ENCODE measurements at regions of chr20 and their contacts with region 1.

Region 1: DNA sequence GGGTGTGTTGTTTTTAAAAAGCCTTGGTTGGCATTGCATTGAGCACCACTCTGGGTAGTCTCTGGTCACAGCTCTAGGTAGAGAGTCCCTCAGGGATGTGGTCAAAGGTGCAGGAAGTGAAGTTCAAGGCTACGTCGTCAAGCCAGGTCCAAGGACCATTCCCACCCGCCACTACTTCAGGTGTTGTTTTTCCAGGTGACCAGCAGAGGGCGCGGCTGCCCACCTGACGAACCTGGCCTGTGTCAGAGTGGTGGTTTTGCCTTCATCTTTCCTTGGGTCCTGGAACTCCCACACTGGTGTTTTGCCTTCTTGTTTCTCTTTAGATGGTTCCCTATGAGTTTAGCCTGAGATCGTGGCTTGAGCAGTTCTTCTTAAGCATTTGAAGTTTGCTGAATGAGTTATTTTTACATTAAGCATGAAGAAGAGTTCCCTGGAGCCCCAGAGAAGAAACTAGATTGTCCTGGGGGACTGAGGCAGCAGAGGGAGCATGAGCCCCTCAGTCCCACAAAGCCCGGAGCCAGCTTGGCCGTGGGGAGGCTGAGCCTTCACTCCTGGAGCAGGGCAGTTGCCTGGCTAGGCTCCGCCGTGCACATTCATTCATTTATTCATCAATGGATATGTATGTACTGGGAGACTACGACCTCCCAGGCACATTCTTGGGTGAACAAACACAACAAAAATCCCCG is 5.6 kb upstream of the PHACTR3 start:
- DNase-seq: peak in 2 of 9 donors; percentile 5 to 15
- ATAC-seq: no peak
- H3K4me3 ChIP-seq: no peak overlapping the region
- H3K4me3 Mint-ChIP-seq: no peak overlapping the region
- H3K27ac ChIP-seq: no peak overlapping the region
- H3K27ac Mint-ChIP-seq: no peak overlapping the region
- H3K4me1 ChIP-seq: no peaks in the 10 kb centered on the region
- H3K4me1 Mint-ChIP-seq: peaks cover 0 to 4% (median 4%) of the 10 kb centered on the region in 7 donors
- H3K27me3 ChIP-seq: no peaks in the 10 kb centered on the region
- H3K27me3 Mint-ChIP-seq: peaks cover 52 to 65% (median 59%) of the 10 kb centered on the region in 5 donors

Region 2: DNA sequence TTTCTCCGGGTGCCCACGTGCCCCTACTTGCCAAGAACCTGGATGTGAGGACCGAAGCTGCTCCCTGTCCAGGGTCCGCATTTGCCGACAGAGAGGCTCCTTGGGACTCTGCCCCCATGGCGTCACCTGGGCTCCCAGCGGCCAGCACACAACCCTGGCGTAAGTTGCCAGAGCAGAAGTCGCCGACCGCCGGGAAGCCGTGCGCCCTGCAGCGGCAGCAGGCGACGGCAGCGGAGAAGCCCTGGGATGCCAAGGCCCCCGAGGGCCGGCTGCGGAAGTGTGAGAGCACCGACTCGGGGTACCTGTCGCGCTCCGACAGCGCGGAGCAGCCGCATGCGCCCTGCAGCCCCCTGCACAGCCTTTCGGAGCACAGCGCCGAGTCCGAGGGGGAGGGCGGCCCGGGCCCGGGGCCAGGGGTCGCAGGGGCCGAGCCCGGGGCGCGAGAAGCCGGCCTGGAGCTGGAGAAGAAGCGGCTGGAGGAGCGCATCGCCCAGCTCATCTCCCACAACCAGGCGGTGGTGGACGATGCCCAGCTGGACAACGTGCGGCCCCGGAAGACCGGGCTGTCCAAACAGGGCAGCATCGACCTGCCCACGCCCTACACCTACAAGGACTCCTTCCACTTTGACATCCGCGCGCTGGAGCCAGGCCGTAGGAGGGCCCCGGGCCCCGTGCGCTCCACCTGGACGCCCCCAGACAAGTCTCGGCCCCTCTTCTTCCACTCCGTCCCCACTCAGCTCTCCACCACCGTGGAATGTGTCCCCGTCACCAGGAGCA is 406.8 kb before region 1 on chr20:
- CTCF ChIA-PET with region 1: no interaction called
- POLR2A ChIA-PET with region 1: no interaction called
- intact Hi-C with region 1: no loop called
- DNase-seq: no peak
- ATAC-seq: no peak
- H3K4me3 ChIP-seq: no peak overlapping the region
- H3K4me3 Mint-ChIP-seq: no peak overlapping the region
- H3K27ac ChIP-seq: no peak overlapping the region
- H3K27ac Mint-ChIP-seq: no peak overlapping the region
- H3K4me1 ChIP-seq: peaks cover 0 to 3% of the 10 kb centered on the region in 2 donors
- H3K4me1 Mint-ChIP-seq: peaks cover 0 to 15% (median 10%) of the 10 kb centered on the region in 7 donors
- H3K27me3 ChIP-seq: no peaks in the 10 kb centered on the region
- H3K27me3 Mint-ChIP-seq: no peaks in the 10 kb centered on the region

Region 3: DNA sequence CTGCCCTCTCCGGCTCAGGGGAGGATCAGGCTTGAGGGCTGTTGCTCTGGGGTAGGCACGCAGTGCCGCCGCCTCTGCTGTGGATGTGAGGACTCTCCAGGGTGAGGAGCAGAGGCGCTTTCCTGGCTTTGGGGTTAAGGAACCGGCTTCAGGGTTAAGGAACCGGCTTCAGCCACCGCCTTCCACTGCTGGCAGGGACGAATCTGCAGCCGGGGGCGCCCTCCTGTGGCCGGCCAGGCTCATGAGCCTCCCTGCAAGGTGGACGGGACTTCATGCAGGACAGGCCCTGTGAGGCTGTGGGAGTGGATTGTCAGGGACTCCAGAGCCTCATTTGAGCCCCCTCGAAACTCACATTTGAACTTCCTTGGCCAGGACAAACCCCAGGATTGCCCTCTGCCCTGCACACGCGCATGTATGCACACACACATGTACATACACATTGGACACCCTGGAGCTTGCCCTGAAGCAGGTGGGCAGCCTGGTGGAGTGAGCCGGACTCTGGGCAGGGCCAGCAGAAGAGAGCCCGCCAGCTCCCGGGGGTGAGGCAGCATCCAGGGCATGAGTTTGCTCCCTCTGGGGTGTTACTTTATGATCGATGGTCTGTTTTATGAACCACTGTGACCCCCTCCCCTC is 152.4 kb after region 1 on chr20:
- CTCF ChIA-PET with region 1: no interaction called
- POLR2A ChIA-PET with region 1: no interaction called
- intact Hi-C with region 1: loop called in 1 of 2 experiments (anchors 2 kb)
- DNase-seq: peak in 2 of 9 donors; percentile 28 to 29
- ATAC-seq: peak; percentile 68
- H3K4me3 ChIP-seq: no peak overlapping the region
- H3K4me3 Mint-ChIP-seq: no peak overlapping the region
- H3K27ac ChIP-seq: no peak overlapping the region
- H3K27ac Mint-ChIP-seq: no peak overlapping the region
- H3K4me1 ChIP-seq: no peaks in the 10 kb centered on the region
- H3K4me1 Mint-ChIP-seq: peaks cover 0 to 12% (median 0%) of the 10 kb centered on the region in 7 donors
- H3K27me3 ChIP-seq: no peaks in the 10 kb centered on the region
- H3K27me3 Mint-ChIP-seq: peaks cover 3 to 48% (median 22%) of the 10 kb centered on the region in 5 donors

Region 4: DNA sequence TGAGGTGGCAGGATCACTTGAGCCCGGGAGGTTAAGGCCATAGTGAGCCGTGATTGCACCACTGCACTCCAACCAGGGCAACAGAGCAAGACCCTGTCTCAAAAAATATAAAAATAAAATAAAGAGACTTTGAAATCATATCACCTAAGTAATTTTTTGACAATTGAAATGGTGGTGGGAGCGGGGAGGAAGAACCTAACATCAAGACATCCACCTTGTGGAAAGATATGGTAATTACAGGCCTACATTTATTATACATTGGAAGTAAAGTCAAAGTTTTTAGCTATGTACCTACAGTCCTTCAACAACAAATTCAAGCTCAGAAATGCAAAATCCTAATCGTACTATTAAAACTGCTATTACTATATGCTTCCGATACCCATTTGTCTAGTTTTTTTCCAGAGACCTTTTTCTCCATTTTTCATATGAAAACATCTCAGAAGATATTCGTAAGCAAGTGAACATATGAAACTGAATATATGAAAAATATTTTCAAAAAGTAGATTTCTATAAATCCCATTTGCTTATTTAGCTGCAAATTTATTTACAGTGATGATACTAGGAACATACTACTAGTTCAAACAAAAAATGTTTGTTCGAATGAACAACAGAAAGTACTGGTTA is 251.4 kb after region 1 on chr20:
- CTCF ChIA-PET with region 1: no interaction called
- POLR2A ChIA-PET with region 1: no interaction called
- intact Hi-C with region 1: loop called in 1 of 2 experiments (anchors 5 kb)
- DNase-seq: peak in 2 of 9 donors; percentile 2
- ATAC-seq: no peak
- H3K4me3 ChIP-seq: no peak overlapping the region
- H3K4me3 Mint-ChIP-seq: no peak overlapping the region
- H3K27ac ChIP-seq: no peak overlapping the region
- H3K27ac Mint-ChIP-seq: no peak overlapping the region
- H3K4me1 ChIP-seq: no peaks in the 10 kb centered on the region
- H3K4me1 Mint-ChIP-seq: no peaks in the 10 kb centered on the region
- H3K27me3 ChIP-seq: no peaks in the 10 kb centered on the region
- H3K27me3 Mint-ChIP-seq: no peaks in the 10 kb centered on the region

Measured in naive thymus-derived CD4-positive, alpha-beta T cell (primary cell).